CD4-positive, alpha-beta memory T cell (primary cell): ENCODE measurements at regions of chr15 and their contacts with region 1.

Region 1: DNA sequence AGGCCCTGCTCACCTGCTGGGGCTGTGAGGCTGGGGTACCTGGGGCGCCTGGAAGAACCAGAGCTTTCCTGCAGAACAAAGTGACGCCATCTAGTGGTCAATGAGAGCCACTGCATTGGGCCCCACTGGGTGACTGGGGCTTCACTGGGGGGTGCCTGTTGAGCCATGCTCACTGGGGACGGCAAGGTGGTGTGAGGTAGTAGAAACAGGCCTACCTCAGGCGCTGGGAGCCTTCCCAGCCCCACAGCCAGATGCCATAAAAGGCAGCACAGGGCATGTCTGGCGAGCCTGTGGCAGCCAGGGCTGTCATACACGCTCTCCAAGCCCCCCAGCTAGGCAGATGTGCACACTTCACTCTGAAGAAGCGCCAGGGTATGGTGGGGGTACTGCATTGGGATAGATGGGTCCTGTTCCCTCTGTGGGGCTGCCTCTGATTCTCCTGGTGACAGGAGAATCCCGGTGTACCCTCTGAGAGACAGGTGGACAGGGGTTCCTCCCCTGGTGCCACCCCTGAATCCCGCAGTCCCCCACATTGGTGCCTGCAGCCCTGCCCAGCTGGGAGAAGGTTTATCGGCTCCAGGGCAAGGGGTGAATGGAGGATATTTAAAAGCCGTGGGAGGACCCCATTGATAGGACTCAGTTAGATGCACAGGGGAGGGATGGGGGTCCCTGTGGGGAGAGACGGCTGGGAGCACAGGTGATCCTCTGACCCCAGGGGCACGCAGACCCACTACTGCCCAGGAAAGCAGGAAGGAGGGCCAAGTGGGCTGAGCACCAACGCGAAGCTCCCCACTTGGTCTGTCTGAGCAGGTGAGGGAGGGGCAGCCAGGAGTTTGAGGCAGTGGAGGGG is 178.8 kb downstream of the NSMCE3 start:
- DNase-seq: peak in 4 of 5 donors; percentile 31 to 51 (median 35)
- H3K4me3 ChIP-seq: no peak overlapping the region
- H3K4me3 Mint-ChIP-seq: peak overlapping the region in 3 of 8 donors; percentile 70 to 82 (median 76)
- H3K27ac ChIP-seq: peak overlapping the region; percentile 2
- H3K27ac Mint-ChIP-seq: peak overlapping the region in 1 of 7 donors; percentile 75
- H3K4me1 ChIP-seq: peaks cover 19% of the 10 kb centered on the region
- H3K4me1 Mint-ChIP-seq: peaks cover 18 to 35% (median 26%) of the 10 kb centered on the region in 4 donors
- H3K27me3 ChIP-seq: no peaks in the 10 kb centered on the region
- H3K27me3 Mint-ChIP-seq: no peaks in the 10 kb centered on the region

Region 2: DNA sequence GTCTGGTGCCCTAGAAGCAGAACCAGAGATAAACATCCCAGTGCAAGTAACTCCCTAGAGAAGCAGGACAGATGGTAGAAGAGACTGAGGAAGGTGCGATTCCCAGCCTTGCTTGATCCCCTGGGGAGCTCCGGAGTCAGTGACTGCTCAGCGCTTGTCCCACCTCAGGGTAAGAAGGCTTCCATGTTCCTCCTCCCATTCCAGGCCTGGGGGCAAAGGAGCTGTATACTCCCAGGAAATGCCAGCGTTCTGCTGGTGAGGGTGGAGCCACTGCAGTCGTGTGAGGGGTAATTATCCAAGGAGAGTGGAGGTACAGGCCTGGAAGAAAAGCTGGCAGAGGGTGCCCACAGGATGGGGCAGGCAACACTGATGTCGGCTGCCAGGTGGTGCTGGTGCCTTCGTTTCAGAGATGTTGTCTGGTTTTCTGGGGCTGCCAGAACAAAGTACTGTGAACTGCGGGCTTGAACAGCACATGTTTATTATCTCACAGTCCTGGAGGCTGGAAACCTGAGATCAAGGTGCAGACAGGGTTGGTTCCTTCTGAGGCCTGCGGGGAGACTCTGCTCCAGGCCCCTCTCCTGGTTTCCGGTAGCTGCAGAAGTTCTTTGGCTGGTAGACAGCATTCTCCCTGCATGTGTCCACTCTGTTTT is 217.2 kb before region 1 on chr15:
- CTCF ChIA-PET with region 1: interaction called, 3 read pairs
- POLR2A ChIA-PET with region 1: no interaction called
- intact Hi-C with region 1: loop called (anchors 10 kb)
- DNase-seq: peak in 4 of 5 donors; percentile 19 to 37 (median 28)
- H3K4me3 ChIP-seq: no peak overlapping the region
- H3K4me3 Mint-ChIP-seq: no peak overlapping the region
- H3K27ac ChIP-seq: no peak overlapping the region
- H3K27ac Mint-ChIP-seq: no peak overlapping the region
- H3K4me1 ChIP-seq: no peaks in the 10 kb centered on the region
- H3K4me1 Mint-ChIP-seq: peaks cover 0 to 2% (median 0%) of the 10 kb centered on the region in 4 donors
- H3K27me3 ChIP-seq: no peaks in the 10 kb centered on the region
- H3K27me3 Mint-ChIP-seq: peaks cover 0 to 1% of the 10 kb centered on the region in 2 donors

Region 3: DNA sequence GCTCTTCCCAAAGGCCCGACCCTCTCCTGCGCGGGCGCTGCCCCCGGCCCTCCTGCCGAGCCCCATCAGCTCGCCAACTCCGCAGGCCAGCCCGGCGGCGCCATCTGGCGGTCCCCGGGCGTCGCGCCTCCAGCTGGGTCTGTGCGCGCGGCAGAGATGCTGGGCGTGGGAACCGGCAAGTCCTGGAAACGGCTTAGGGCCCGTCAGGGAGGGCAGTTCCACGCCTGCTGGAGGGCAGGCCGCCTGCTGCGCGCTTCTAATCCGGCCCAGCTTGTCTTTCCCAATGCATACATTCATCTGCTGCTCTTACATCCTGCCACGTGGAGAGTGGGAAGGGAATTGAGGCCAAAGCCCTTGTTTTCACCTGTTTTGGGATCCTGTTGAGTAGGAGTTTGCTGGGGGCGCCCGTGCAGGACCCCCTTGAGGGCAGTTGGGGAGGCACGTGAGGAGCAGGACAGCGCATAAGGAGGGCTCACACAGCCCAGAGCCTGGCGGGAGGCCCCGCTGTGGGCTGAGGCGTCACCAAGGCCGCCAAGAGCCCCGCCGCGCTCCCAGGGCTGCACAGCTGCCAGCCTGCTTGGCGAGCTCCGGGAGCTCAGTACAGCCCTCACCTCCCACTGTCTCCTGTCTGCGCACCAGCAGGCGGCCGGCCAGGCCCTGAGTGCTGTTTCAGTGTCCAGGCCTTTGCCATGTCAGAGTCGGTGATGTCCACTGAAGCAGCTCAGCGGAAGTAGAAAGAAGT is 13.2 kb after region 1 on chr15:
- CTCF ChIA-PET with region 1: interaction called, 46 read pairs
- POLR2A ChIA-PET with region 1: no interaction called
- intact Hi-C with region 1: no loop called
- DNase-seq: peak in 4 of 5 donors; percentile 34 to 47 (median 43)
- H3K4me3 ChIP-seq: no peak overlapping the region
- H3K4me3 Mint-ChIP-seq: peak overlapping the region in 1 of 8 donors; percentile 4
- H3K27ac ChIP-seq: no peak overlapping the region
- H3K27ac Mint-ChIP-seq: no peak overlapping the region
- H3K4me1 ChIP-seq: no peaks in the 10 kb centered on the region
- H3K4me1 Mint-ChIP-seq: peaks cover 0 to 12% (median 6%) of the 10 kb centered on the region in 4 donors
- H3K27me3 ChIP-seq: no peaks in the 10 kb centered on the region
- H3K27me3 Mint-ChIP-seq: no peaks in the 10 kb centered on the region

Region 4: GRCh38 chr15:29126821-29127461 is 36.1 kb after region 1 on chr15:
- CTCF ChIA-PET with region 1: no interaction called
- POLR2A ChIA-PET with region 1: no interaction called
- intact Hi-C with region 1: no loop called
- DNase-seq: no peak
- H3K4me3 ChIP-seq: no peak overlapping the region
- H3K4me3 Mint-ChIP-seq: no peak overlapping the region
- H3K27ac ChIP-seq: no peak overlapping the region
- H3K27ac Mint-ChIP-seq: no peak overlapping the region
- H3K4me1 ChIP-seq: no peaks in the 10 kb centered on the region
- H3K4me1 Mint-ChIP-seq: peaks cover 0 to 5% (median 1%) of the 10 kb centered on the region in 4 donors
- H3K27me3 ChIP-seq: no peaks in the 10 kb centered on the region
- H3K27me3 Mint-ChIP-seq: peaks cover 0 to 1% of the 10 kb centered on the region in 2 donors